Left ventricle myocardium inferior (tissue), 1 donor: ENCODE measurements at regions of chr3 and their contacts with region 1.

Region 1: GRCh38 chr3:143443851-143444331 is 324.3 kb downstream of the CHST2 start:
- DNase-seq: no peak
- H3K4me3 ChIP-seq: no peak overlapping the region
- H3K27ac ChIP-seq: peak overlapping the region; percentile 69
- H3K4me1 ChIP-seq: peaks cover 23% of the 10 kb centered on the region
- H3K27me3 ChIP-seq: no peaks in the 10 kb centered on the region
- CTCF ChIP-seq: no peak

Region 2: GRCh38 chr3:143302638-143303171 is 141.2 kb before region 1 on chr3:
- intact Hi-C with region 1: loop called (anchors 10 kb)
- DNase-seq: peak; percentile 58
- H3K4me3 ChIP-seq: no peak overlapping the region
- H3K27ac ChIP-seq: peak overlapping the region; percentile 28
- H3K4me1 ChIP-seq: peaks cover 36% of the 10 kb centered on the region
- H3K27me3 ChIP-seq: no peaks in the 10 kb centered on the region
- CTCF ChIP-seq: no peak

Region 3: DNA sequence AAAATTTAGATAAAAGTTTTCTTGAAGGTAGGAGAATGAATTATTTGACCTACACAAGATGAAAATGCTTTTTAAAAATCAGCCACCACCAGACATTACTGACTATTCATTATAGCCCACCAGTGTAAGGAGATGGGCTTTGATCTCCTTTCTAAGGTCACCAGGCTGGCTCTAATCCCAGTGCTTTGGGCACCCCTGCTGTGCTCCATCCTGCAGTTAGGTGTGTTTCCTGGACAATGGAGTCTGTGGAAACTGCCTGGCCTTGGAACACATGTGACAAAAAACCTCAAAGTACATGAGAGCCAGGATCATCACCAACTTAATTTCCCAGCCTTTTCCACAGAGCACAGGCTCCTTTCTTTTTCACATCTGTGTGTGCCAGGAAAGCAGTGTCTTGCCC is 63.4 kb before region 1 on chr3:
- intact Hi-C with region 1: no loop called
- DNase-seq: no peak
- H3K4me3 ChIP-seq: no peak overlapping the region
- H3K27ac ChIP-seq: no peak overlapping the region
- H3K4me1 ChIP-seq: no peaks in the 10 kb centered on the region
- H3K27me3 ChIP-seq: no peaks in the 10 kb centered on the region
- CTCF ChIP-seq: no peak